Dendritic cell treated with granulocyte-macrophage colony-stimulating factor and Interleukin-4, amounts not matched to agents 40 ng/mL and 50 ng/mL, for 4 days (primary cell): ENCODE measurements at regions of chr1 and their contacts with region 1.

Region 1: DNA sequence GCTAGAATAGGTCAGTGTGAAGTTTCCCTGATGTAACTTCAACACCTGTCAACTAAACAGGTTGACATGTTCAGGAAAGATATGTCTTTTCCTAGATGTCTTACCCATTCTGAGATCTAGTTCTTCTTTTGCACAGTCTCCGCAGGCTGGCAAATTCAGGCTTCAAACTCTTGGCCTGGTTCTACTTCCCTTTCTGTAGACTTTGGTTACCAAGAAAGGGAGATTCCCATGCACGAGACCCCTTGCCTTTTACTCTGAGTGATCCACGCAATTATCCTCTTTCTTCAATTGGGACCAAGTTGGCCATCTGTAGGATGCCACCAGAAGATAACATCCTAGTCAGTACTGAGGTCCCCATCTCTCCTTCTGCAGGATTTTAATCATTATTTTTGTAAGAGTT is 2.0 kb downstream of the CFAP45 start:
- H3K4me3 Mint-ChIP-seq: no peak overlapping the region
- H3K27ac Mint-ChIP-seq: peak overlapping the region; percentile 58
- H3K4me1 Mint-ChIP-seq: peaks cover 58% of the 10 kb centered on the region
- H3K27me3 Mint-ChIP-seq: peaks cover 18% of the 10 kb centered on the region

Region 2: GRCh38 chr1:159923203-159924024 is 25.5 kb after region 1 on chr1:
- intact Hi-C with region 1: loop called (anchors 2 kb)
- H3K4me3 Mint-ChIP-seq: peak overlapping the region; percentile 81
- H3K27ac Mint-ChIP-seq: peak overlapping the region; percentile 93
- H3K4me1 Mint-ChIP-seq: peaks cover 63% of the 10 kb centered on the region
- H3K27me3 Mint-ChIP-seq: no peaks in the 10 kb centered on the region